B cell (primary cell): ENCODE measurements at regions of chr12 and their contacts with region 1.

Region 1: GRCh38 chr12:113135178-113136127 is at the start of gene RASAL1:
- DNase-seq: peak; percentile 74
- ATAC-seq: peak; percentile 80
- H3K4me3 ChIP-seq: peak within 1 kb of the TSS in 4 of 5 experiments; percentile 24 to 46 (median 32)
- H3K4me3 Mint-ChIP-seq: peak within 1 kb of the TSS; percentile 84
- H3K27ac ChIP-seq: no peak within 1 kb of the TSS
- H3K27ac Mint-ChIP-seq: peak within 1 kb of the TSS; percentile 85
- H3K4me1 ChIP-seq: peaks cover 16 to 25% of the 10 kb centered on the region in 2 donors
- H3K4me1 Mint-ChIP-seq: peaks cover 26% of the 10 kb centered on the region
- H3K27me3 ChIP-seq: peaks cover 0 to 21% (median 6%) of the 10 kb centered on the region in 4 experiments
- H3K27me3 Mint-ChIP-seq: peaks cover 6% of the 10 kb centered on the region
- CTCF ChIP-seq: peak; percentile 70
- total RNA-seq, gene RASAL1: 11.0 and 13.9 TPM in 2 replicates

Region 2: DNA sequence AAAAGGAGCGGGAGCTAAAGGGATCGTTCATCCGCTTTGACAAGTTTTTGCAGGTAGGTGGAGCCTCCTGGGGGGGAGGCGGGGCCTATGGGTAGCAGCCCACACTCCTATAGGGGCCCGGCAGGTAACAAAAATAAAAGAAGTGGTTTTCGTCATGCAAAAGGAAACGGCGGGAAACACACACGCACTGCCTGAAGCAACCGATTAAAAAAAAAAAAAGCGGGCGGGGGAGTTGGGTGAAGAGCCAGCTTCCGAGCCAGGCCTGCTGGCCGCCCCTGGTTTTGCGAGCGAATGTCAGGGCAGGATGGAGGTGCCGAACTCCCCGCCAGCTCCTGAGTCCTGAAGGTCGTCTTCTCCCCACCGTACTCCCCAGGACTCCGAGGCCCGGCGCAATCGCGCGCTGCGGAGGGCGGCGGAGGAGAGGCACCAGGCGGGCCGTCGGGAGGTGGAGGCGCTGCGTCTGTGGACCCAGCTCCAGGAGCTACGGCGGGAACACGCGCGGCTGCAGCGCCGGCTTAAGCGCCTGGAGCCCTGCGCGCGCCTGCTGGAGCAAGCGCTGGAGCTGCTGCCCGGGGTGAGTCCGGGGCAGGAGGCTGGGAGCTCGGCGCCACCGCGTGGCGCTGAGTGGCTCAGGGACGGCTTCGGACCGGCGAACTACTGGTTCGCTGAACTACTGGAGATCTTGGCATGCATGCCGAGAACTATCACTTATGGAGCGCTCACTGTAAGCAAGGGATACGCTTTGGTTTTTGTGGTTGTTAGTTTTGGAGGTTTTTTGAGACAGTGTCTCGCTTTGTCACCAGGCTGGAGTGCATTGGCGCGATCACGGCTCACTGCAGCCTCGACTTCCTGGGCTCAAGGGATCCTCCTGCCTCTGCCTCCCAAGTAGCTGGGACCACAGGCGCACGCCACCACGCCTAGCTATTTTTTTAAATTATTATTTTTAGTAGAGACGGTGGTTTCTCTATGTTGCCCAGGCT is 17.7 kb after region 1 on chr12:
- CTCF ChIA-PET with region 1: interaction called, 26 read pairs
- POLR2A ChIA-PET with region 1: interaction called, 5 read pairs
- intact Hi-C with region 1: loop called (anchors 1 kb)
- DNase-seq: peak; percentile 72
- ATAC-seq: peak; percentile 73
- H3K4me3 ChIP-seq: peak overlapping the region; percentile 34 to 61 (median 56)
- H3K4me3 Mint-ChIP-seq: peak overlapping the region; percentile 88
- H3K27ac ChIP-seq: no peak overlapping the region
- H3K27ac Mint-ChIP-seq: no peak overlapping the region
- H3K4me1 ChIP-seq: peaks cover 15 to 32% of the 10 kb centered on the region in 2 donors
- H3K4me1 Mint-ChIP-seq: peaks cover 26% of the 10 kb centered on the region
- H3K27me3 ChIP-seq: peaks cover 0 to 25% (median 8%) of the 10 kb centered on the region in 4 experiments
- H3K27me3 Mint-ChIP-seq: peaks cover 6% of the 10 kb centered on the region
- CTCF ChIP-seq: peak; percentile 23